ENCODE measurements at regions of chr17 and their contacts with region 1.

Region 1: GRCh38 chr17:66906321-66907278 is 57.9 kb upstream of the CACNG4 start:
- DNase-seq: peak; percentile 42 to 60 (median 58)
- H3K4me3 ChIP-seq: no peak overlapping the region
- H3K4me3 Mint-ChIP-seq: no peak overlapping the region
- H3K27ac ChIP-seq: no peak overlapping the region
- H3K27ac Mint-ChIP-seq: peak overlapping the region in 1 of 7 donors; percentile 12
- H3K4me1 ChIP-seq: no peaks in the 10 kb centered on the region
- H3K4me1 Mint-ChIP-seq: peaks cover 4 to 6% (median 5%) of the 10 kb centered on the region in 4 donors
- H3K27me3 ChIP-seq: no peaks in the 10 kb centered on the region
- H3K27me3 Mint-ChIP-seq: peaks cover 2 to 9% of the 10 kb centered on the region in 2 donors

Region 2: DNA sequence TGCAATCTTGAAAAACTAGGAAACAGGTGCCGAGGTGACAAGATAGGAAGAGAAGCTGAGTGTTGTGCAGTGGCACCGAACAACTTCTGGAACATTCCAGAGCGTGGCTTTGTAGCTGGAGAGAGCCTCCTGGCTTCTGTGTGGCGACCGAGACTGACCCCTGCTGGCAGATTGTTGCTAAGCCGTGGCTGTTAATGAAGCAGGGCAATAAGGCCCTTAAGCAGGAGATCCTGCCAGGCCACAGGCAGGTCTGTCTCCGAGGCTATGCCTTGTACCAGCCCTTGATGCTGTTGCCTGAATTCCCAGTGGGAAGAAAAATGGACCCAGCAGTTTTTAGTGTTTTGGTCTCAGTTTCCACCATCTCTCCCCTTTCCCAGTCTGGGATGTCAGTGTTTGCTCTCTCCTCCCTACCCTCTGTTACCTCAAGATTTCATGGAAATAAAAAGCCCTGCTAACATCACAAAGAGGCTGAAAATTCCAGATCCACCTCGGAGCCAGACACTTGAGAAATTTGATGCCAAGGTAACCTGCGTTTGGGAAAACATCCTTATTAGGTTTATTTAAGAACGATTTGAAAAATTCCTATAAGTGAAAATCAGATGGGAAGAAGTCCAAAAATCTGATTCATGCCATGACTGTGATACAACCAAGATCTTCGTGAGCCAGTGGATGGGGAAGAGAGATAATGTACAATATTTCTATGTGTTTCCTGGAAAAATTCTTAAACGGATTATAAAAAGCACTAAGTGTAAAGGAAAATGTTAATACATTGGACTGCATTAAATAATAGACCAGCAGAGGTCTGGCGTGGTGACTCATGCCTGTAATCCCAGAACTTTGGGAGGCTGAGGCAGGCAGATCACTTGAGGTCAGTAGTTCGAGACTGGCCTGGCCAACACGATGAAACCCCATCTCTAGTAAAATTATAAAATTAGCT is 339.1 kb before region 1 on chr17:
- CTCF ChIA-PET with region 1: interaction called, 3 read pairs
- POLR2A ChIA-PET with region 1: no interaction called
- intact Hi-C with region 1: loop called (anchors 10 kb)
- DNase-seq: peak; percentile 60 to 77 (median 62)
- H3K4me3 ChIP-seq: no peak overlapping the region
- H3K4me3 Mint-ChIP-seq: peak overlapping the region in 1 of 8 donors; percentile 21
- H3K27ac ChIP-seq: no peak overlapping the region
- H3K27ac Mint-ChIP-seq: peak overlapping the region in 3 of 7 donors; percentile 8 to 68 (median 9)
- H3K4me1 ChIP-seq: peaks cover 8% of the 10 kb centered on the region
- H3K4me1 Mint-ChIP-seq: peaks cover 21 to 32% (median 26%) of the 10 kb centered on the region in 4 donors
- H3K27me3 ChIP-seq: no peaks in the 10 kb centered on the region
- H3K27me3 Mint-ChIP-seq: no peaks in the 10 kb centered on the region

Region 3: DNA sequence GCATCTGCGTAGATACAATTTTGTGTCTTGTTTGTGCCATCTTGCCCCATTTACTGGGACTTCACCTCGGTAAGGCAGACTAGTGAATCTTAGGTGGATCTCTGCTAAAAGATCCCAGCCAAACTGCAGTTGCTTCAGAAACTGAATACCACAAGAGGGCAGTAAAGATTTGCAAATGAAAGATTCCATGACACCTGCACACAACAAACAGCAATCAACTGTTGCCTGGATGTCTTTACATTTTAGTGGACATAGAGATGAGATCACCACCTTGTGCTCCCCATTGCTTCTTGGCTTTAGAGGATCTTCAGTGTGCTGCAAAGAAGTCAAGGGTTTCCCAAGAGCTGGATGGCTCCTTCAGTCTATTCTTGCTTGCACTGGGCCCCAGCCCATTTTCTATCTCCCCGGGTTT is 190.8 kb before region 1 on chr17:
- CTCF ChIA-PET with region 1: interaction called, 4 read pairs
- POLR2A ChIA-PET with region 1: no interaction called
- intact Hi-C with region 1: loop called (anchors 1 kb)
- DNase-seq: peak in 4 of 5 donors; percentile 30 to 49 (median 36)
- H3K4me3 ChIP-seq: no peak overlapping the region
- H3K4me3 Mint-ChIP-seq: no peak overlapping the region
- H3K27ac ChIP-seq: no peak overlapping the region
- H3K27ac Mint-ChIP-seq: peak overlapping the region in 2 of 7 donors; percentile 31 to 48
- H3K4me1 ChIP-seq: peaks cover 12% of the 10 kb centered on the region
- H3K4me1 Mint-ChIP-seq: peaks cover 13 to 38% (median 27%) of the 10 kb centered on the region in 4 donors
- H3K27me3 ChIP-seq: no peaks in the 10 kb centered on the region
- H3K27me3 Mint-ChIP-seq: no peaks in the 10 kb centered on the region

Region 4: GRCh38 chr17:67082107-67082506 is 175.5 kb after region 1 on chr17:
- CTCF ChIA-PET with region 1: no interaction called
- POLR2A ChIA-PET with region 1: no interaction called
- intact Hi-C with region 1: loop called (anchors 5 kb)
- DNase-seq: peak in 4 of 5 donors; percentile 53 to 67 (median 60)
- H3K4me3 ChIP-seq: no peak overlapping the region
- H3K4me3 Mint-ChIP-seq: peak overlapping the region in 7 of 8 donors; percentile 9 to 70 (median 45)
- H3K27ac ChIP-seq: peak overlapping the region; percentile 21
- H3K27ac Mint-ChIP-seq: peak overlapping the region; percentile 43 to 90 (median 67)
- H3K4me1 ChIP-seq: peaks cover 26% of the 10 kb centered on the region
- H3K4me1 Mint-ChIP-seq: peaks cover 15 to 31% (median 23%) of the 10 kb centered on the region in 4 donors
- H3K27me3 ChIP-seq: no peaks in the 10 kb centered on the region
- H3K27me3 Mint-ChIP-seq: no peaks in the 10 kb centered on the region

Measured in CD4-positive, alpha-beta memory T cell (primary cell).